Transverse colon (tissue), 4 donors: ENCODE measurements at regions of chr21 and their contacts with region 1.

Region 1: GRCh38 chr21:38733973-38734546 is 71.7 kb upstream of the ETS2 start:
- DNase-seq: peak; percentile 93
- H3K4me3 ChIP-seq: peak overlapping the region in 3 of 4 donors; percentile 3 to 41 (median 20)
- H3K27ac ChIP-seq: peak overlapping the region; percentile 72 to 86 (median 84)
- H3K4me1 ChIP-seq: peaks cover 8 to 23% (median 21%) of the 10 kb centered on the region in 4 donors
- H3K27me3 ChIP-seq: no peaks in the 10 kb centered on the region
- CTCF ChIP-seq: peak; percentile 92 to 98 (median 96)
- EP300 ChIP-seq: no peak
- POLR2A ChIP-seq: no peak

Region 2: GRCh38 chr21:38798481-38798882 is 64.4 kb after region 1 on chr21:
- in situ Hi-C with region 1: loop called in 1 of 4 experiments (anchors 10 kb)
- intact Hi-C with region 1: no loop called
- DNase-seq: peak; percentile 84
- H3K4me3 ChIP-seq: no peak overlapping the region
- H3K27ac ChIP-seq: peak overlapping the region in 2 of 4 donors; percentile 56 to 75
- H3K4me1 ChIP-seq: peaks cover 0 to 56% (median 22%) of the 10 kb centered on the region in 4 donors
- H3K27me3 ChIP-seq: no peaks in the 10 kb centered on the region
- CTCF ChIP-seq: no peak
- EP300 ChIP-seq: no peak
- POLR2A ChIP-seq: peak; percentile 31

Region 3: DNA sequence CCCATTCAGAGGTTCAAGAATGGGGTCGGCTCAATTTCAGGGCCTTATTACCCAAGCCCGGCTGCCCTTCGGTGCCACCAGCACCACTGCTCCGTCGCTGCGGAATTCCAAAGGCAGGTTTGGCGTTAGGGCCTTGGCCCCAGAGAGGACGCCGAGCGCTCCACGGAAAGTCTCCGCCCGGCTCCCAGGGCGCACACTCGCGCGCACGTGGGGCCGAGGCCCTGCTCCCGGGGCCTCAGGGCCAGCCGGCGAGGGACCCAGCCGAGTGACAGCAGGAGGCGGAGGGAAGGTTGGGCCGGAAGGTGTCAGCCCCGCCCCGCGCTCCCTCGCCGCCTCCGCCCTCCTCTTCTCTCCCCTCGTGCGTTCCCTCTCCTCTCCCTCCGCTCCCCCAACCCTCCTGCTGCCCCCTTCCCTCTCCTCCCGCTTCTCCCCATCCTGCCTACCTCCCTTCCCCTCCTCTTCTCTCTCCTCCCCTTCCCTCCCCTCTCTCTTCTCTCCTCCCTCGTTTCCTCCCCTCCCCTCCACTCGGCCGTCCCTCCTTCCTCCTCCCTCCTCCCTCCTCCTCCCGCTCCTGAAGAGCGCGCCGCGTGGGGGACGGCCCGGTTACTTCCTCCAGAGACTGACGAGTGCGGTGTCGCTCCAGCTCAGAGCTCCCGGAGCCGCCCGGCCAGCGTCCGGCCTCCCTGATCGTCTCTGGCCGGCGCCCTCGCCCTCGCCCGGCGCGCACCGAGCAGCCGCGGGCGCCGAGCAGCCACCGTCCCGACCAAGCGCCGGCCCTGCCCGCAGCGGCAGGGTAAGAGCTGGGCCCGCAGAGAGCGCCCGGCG is 71.5 kb after region 1 on chr21 and contains the start of gene ETS2:
- in situ Hi-C with region 1: no loop called
- intact Hi-C with region 1: loop called (anchors 5 kb)
- DNase-seq: peak; percentile 93
- H3K4me3 ChIP-seq: peak within 1 kb of the TSS; percentile 89 to 98 (median 96)
- H3K27ac ChIP-seq: peak within 1 kb of the TSS; percentile 94 to 99 (median 98)
- H3K4me1 ChIP-seq: peaks cover 8 to 55% (median 49%) of the 10 kb centered on the region in 4 donors
- H3K27me3 ChIP-seq: no peaks in the 10 kb centered on the region
- CTCF ChIP-seq: no peak
- EP300 ChIP-seq: peak; percentile 33
- POLR2A ChIP-seq: peak; percentile 98
- total RNA-seq, gene ETS2: 55.1 to 174 (median 127) TPM

Region 4: GRCh38 chr21:38853421-38853919 is 119.4 kb after region 1 on chr21:
- in situ Hi-C with region 1: no loop called
- intact Hi-C with region 1: no loop called
- DNase-seq: no peak
- H3K4me3 ChIP-seq: no peak overlapping the region
- H3K27ac ChIP-seq: no peak overlapping the region
- H3K4me1 ChIP-seq: peaks cover 0 to 7% (median 0%) of the 10 kb centered on the region in 4 donors
- H3K27me3 ChIP-seq: no peaks in the 10 kb centered on the region
- CTCF ChIP-seq: no peak
- EP300 ChIP-seq: no peak
- POLR2A ChIP-seq: no peak

Region 5: DNA sequence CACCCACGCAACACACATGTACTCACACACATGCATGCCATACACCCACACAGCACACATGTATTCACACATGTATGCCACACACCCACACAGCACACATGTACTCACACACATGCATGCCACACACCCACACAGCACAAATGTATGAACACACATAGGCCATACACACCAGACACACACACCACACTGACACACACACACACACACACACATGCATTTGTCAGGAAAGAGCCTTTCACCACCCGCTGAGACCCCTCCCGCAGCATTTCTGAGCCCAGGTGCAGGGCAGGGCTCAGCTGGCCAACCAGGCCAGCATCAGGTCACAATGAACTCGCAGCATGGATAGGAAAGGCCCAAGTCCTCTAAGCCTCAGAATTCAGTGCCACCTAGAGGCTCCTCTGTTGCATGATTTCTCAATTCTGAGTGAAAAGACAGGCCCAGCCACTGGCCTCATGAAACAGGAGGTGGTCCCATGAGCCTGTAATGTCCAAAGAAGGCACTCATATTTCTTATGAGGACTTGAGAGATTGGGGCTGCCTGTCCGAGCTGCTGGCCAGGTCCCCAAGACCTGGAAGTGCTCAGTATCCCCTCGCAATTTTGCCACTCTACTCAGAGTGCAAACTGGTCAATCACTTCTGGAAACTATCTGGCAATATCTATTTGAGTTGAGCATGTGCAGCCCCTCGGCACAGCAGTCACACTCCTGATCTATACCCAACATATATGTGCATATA is 391.9 kb after region 1 on chr21:
- in situ Hi-C with region 1: loop called in 1 of 4 experiments (anchors 5 kb)
- intact Hi-C with region 1: no loop called
- DNase-seq: peak; percentile 51
- H3K4me3 ChIP-seq: no peak overlapping the region
- H3K27ac ChIP-seq: peak overlapping the region; percentile 32 to 57 (median 54)
- H3K4me1 ChIP-seq: peaks cover 0 to 14% (median 2%) of the 10 kb centered on the region in 4 donors
- H3K27me3 ChIP-seq: no peaks in the 10 kb centered on the region
- CTCF ChIP-seq: peak; percentile 56 to 76 (median 60)
- EP300 ChIP-seq: no peak
- POLR2A ChIP-seq: no peak

Region 6: GRCh38 chr21:39137248-39138178 is 403.5 kb after region 1 on chr21:
- in situ Hi-C with region 1: loop called in 3 of 4 experiments (anchors 5 to 10 kb)
- intact Hi-C with region 1: loop called (anchors 2 kb)
- DNase-seq: no peak
- H3K4me3 ChIP-seq: no peak overlapping the region
- H3K27ac ChIP-seq: no peak overlapping the region
- H3K4me1 ChIP-seq: peaks cover 0 to 6% (median 2%) of the 10 kb centered on the region in 4 donors
- H3K27me3 ChIP-seq: no peaks in the 10 kb centered on the region
- CTCF ChIP-seq: no peak
- EP300 ChIP-seq: no peak
- POLR2A ChIP-seq: no peak

Region 7: GRCh38 chr21:39527664-39528381 is 793.8 kb after region 1 on chr21:
- in situ Hi-C with region 1: no loop called
- intact Hi-C with region 1: loop called (anchors 5 kb)
- DNase-seq: peak; percentile 68
- H3K4me3 ChIP-seq: no peak overlapping the region
- H3K27ac ChIP-seq: peak overlapping the region; percentile 56 to 74 (median 66)
- H3K4me1 ChIP-seq: peaks cover 6 to 21% (median 15%) of the 10 kb centered on the region in 4 donors
- H3K27me3 ChIP-seq: no peaks in the 10 kb centered on the region
- CTCF ChIP-seq: no peak
- EP300 ChIP-seq: no peak
- POLR2A ChIP-seq: no peak